CD14-positive monocyte (primary cell): ENCODE measurements at regions of chr3 and their contacts with region 1.

Region 1: DNA sequence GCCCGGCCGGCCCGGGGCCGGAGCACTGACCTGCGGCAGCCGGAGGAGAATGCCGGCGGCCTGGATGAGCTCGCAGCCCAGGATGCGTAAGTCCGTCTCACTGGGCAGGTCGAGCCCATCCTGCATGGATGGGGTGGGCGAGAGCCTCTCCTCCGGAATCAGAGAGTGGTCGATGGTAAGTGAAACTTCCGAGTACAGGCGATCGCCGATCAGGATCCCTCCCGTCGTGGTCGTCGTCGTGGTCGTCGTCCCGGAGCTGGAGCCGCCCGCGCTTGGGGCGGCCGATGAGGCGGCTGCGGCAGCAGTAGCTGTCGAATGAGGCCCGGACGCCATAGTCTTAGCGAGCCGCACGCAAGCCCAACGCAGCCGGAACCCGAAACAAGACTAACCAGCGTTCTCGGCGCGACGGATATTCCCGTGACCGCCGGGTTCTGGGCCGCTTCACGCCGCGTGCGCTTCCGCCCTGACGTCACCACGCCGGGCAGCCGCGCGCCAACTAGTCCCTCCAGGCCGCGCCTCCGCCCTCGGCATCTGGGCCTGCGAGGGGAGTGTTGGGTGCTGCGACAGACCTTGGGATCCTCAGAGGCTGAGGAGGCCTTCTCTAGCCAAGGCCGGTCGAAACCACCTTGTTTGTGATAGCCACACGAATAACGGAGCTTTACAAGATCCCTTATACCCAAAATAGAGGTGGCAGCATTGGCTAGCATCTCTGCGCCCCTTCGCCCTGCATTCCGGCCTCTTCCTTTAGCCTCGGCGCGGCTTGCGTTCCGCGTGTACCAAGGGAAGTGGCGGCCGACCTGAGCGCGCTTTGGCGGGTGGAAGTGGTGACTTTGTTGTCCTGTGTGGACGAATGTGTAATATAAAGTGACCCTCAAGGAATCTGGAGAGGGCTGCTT is at the start of gene CCNL1:
- DNase-seq: peak; percentile 97 to 99 (median 99)
- H3K4me3 ChIP-seq: peak within 1 kb of the TSS; percentile 88 to 99 (median 93)
- H3K4me3 Mint-ChIP-seq: peak within 1 kb of the TSS; percentile 99
- H3K27ac ChIP-seq: peak within 1 kb of the TSS; percentile 95 to 100
- H3K27ac Mint-ChIP-seq: peak within 1 kb of the TSS; percentile 99 to 100 (median 99)
- H3K4me1 ChIP-seq: peaks cover 43 to 66% of the 10 kb centered on the region in 2 donors
- H3K4me1 Mint-ChIP-seq: peaks cover 54% of the 10 kb centered on the region
- H3K27me3 ChIP-seq: no peaks in the 10 kb centered on the region
- H3K27me3 Mint-ChIP-seq: peaks cover 0 to 8% (median 0%) of the 10 kb centered on the region in 3 donors
- CTCF ChIP-seq: no peak
- polyA plus RNA-seq, gene CCNL1: 32.0 to 751 (median 42.3) TPM

Region 2: DNA sequence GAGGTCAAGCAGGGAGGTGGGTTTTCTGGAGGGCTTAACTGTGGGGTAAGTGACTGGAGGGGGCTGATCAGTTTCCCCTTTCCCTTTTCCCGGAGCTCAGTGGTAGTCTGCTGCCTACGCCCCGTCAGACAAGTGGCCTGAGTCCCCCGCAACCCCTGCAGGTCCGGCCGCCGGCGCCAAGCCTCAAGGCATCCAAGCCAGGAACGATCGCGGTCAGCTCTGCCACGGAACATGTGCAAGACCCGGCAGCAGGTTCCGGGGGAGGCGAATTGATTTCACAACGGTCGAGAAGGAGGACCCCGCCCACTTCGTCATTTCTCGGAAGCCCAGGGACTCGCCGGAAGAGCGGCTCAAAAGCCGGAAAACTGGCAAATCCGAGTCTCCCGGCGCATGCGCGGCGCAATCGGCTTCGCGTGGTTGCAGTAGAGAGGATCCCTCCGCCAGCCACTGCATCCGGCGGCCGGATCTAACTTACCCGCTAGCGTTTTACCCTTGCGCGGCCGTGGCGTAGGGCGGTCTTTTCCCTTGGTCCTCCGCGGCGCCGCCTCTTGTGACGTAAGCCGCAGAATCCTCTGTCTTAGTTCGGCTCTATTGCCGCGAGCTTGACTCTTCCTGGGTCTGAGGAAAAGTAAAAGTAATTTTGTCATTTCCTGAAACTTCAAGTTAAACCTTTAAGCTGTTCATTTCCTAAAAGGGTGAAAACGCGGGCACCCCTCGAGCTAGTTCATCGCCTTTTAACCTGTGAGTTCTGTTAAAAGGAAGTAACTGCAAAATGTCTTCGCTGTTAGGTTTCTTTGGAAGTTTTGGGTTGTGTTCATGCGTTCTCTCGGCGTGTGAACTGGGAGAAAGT is 14.9 kb after region 1 on chr3:
- intact Hi-C with region 1: loop called (anchors 1 to 2 kb)
- DNase-seq: peak; percentile 99 to 100 (median 100)
- H3K4me3 ChIP-seq: peak overlapping the region; percentile 66 to 97 (median 92)
- H3K4me3 Mint-ChIP-seq: peak overlapping the region; percentile 91 to 99
- H3K27ac ChIP-seq: peak overlapping the region; percentile 90 to 98
- H3K27ac Mint-ChIP-seq: peak overlapping the region; percentile 96 to 99 (median 99)
- H3K4me1 ChIP-seq: peaks cover 31 to 32% of the 10 kb centered on the region in 2 donors
- H3K4me1 Mint-ChIP-seq: peaks cover 31% of the 10 kb centered on the region
- H3K27me3 ChIP-seq: no peaks in the 10 kb centered on the region
- H3K27me3 Mint-ChIP-seq: no peaks in the 10 kb centered on the region
- CTCF ChIP-seq: no peak

Region 3: DNA sequence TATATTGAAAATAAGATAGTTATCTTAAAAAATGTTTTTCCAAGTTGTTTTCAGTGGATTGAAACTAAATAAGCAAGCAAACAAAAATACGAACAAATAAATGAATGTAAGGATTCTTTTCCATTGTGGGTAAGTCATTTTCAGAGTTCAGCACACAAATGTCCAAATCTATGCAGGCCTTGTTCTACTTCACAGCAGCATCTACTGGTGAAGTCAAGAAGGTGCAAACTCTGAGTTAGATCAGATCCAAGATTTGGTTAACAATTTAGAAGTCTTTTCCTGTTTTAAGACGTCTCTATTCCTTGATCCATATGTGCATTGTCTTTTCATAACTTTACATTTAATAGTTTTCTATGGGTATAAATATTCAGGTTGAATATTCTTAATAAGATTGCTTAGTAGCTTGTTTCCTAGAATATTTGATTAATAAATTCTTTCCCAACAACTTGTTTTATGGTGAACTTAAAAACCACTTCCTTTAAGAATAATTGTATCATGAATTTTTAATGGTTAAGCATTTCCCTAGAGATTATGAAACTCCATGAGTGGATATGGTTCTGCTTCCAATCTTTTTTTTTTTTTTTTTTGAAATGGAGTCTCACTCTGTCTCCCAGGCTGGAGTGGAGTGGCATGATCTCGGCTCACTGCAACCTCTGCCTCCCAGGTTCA is 287.1 kb after region 1 on chr3:
- intact Hi-C with region 1: loop called in 1 of 2 experiments (anchors 5 kb)
- DNase-seq: peak in 2 of 3 donors; percentile 25 to 33
- H3K4me3 ChIP-seq: no peak overlapping the region
- H3K4me3 Mint-ChIP-seq: no peak overlapping the region
- H3K27ac ChIP-seq: peak overlapping the region in 1 of 2 donors; percentile 49
- H3K27ac Mint-ChIP-seq: peak overlapping the region in 3 of 7 donors; percentile 30 to 77 (median 35)
- H3K4me1 ChIP-seq: peaks cover 40 to 49% of the 10 kb centered on the region in 2 donors
- H3K4me1 Mint-ChIP-seq: peaks cover 46% of the 10 kb centered on the region
- H3K27me3 ChIP-seq: no peaks in the 10 kb centered on the region
- H3K27me3 Mint-ChIP-seq: no peaks in the 10 kb centered on the region
- CTCF ChIP-seq: peak; percentile 56